ENCODE measurements at regions of chr5 and their contacts with region 1.

Region 1: DNA sequence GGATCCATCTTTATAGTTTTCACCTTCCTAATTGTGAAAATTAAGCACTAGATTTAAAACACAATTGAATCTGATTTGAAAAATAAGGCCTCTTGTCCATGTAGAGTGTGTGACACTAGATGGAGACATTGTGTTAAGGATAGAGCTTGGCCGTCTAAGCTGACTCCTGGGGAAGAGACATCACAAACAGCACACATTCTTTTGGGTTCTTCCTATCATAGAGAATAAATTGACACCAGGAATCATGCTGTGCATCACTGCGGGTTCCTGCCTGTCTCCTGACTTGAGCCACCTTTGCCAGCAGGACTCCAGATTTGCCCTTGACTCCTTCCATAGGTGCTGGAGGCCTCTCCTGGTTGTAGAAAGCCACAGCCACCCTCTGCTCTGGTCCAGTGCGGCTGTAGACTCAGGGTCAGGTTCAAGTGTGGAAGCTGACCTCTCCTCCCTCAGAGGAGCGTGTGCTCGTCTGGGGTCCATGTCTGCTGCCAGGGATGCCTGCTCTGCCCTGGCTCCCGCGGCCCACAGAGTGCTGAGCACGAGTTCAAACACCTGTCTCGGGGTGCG is 11.2 kb downstream of the ROPN1L start:
- DNase-seq: peak; percentile 62
- ATAC-seq: peak; percentile 94
- H3K4me3 ChIP-seq: no peak overlapping the region
- H3K27ac ChIP-seq: no peak overlapping the region
- H3K4me1 ChIP-seq: no peaks in the 10 kb centered on the region
- H3K27me3 ChIP-seq: no peaks in the 10 kb centered on the region; a peak in 1 of 4 replicates
- CTCF ChIP-seq: peak; percentile 70 to 89 (median 81)
- EP300 ChIP-seq: no peak
- POLR2A ChIP-seq: no peak
- RAD21 ChIP-seq: peak; percentile 100

Region 2: DNA sequence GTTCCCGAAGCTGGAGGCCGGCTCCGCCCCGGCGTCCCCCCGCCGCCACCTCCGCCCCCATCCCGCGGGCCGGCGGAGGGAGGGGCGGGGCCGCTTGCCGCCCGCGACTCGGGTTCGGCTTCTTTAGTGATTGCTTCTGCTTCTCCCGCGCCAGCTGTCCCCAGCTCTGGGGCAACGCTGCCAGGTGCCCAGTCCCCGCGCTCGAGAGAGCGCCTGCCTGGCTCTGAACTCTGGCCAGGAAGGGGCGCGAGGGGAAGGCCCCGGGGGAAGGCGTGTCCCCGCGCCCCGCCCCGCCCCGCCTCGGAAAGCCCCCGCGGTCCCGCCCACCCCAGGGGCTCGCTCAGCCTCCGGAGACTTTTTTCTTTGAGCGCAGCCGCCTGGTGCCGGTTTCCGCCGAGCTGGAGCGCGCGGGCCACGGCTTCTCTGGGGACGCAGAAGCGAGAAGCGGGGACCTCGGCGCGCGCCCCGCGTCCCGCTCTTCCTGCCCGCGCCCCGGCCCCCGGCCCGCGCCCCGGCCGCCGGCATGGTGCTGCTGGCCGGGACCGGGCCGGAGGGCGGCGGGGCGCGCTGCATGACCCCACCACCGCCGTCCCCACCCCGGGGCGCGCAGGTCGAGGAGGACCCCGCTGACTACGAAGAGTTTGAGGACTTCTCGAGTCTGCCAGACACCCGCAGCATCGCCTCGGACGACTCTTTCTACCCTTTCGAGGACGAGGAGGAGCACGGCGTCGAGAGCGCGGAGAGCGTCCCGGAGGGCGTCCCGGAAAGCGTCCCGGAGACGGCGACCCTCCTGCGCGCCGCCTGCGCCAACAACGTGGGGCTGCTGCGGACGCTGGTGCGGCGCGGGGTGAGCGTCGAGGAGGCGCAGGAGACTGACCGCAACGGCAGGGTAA is 111.3 kb after region 1 on chr5 and contains the start of gene ANKRD33B:
- CTCF ChIA-PET with region 1: interaction called, 25 read pairs
- POLR2A ChIA-PET with region 1: interaction called, 3 read pairs
- RAD21 ChIA-PET with region 1: interaction called, 6 read pairs
- SMC1A ChIA-PET with region 1: interaction called, 14 read pairs
- in situ Hi-C with region 1: no loop called
- intact Hi-C with region 1: loop called (anchors 2 kb)
- DNase-seq: no peak
- ATAC-seq: peak; percentile 64
- H3K4me3 ChIP-seq: peak within 1 kb of the TSS; percentile 87
- H3K27ac ChIP-seq: peak within 1 kb of the TSS; percentile 87
- H3K4me1 ChIP-seq: peaks cover 19% of the 10 kb centered on the region
- H3K27me3 ChIP-seq: no peaks in the 10 kb centered on the region
- CTCF ChIP-seq: no peak
- EP300 ChIP-seq: no peak
- POLR2A ChIP-seq: peak; percentile 93
- RAD21 ChIP-seq: peak; percentile 16; the same call in 1 of the 2 replicates
- polyA plus RNA-seq, gene ANKRD33B: 5.9 to 6.1 TPM

Region 3: GRCh38 chr5:10621832-10622231 is 169.0 kb after region 1 on chr5:
- CTCF ChIA-PET with region 1: interaction called, 229 read pairs
- POLR2A ChIA-PET with region 1: interaction called, 18 read pairs
- RAD21 ChIA-PET with region 1: interaction called, 186 read pairs
- SMC1A ChIA-PET with region 1: interaction called, 168 read pairs
- in situ Hi-C with region 1: loop called (anchors 5 kb)
- intact Hi-C with region 1: no loop called
- DNase-seq: no peak
- ATAC-seq: peak; percentile 17; the same call in 2 of the 3 replicates
- H3K4me3 ChIP-seq: no peak overlapping the region
- H3K27ac ChIP-seq: peak overlapping the region; percentile 47
- H3K4me1 ChIP-seq: peaks cover 27% of the 10 kb centered on the region
- H3K27me3 ChIP-seq: no peaks in the 10 kb centered on the region
- CTCF ChIP-seq: no peak
- EP300 ChIP-seq: no peak
- POLR2A ChIP-seq: no peak
- RAD21 ChIP-seq: no peak

Region 4: DNA sequence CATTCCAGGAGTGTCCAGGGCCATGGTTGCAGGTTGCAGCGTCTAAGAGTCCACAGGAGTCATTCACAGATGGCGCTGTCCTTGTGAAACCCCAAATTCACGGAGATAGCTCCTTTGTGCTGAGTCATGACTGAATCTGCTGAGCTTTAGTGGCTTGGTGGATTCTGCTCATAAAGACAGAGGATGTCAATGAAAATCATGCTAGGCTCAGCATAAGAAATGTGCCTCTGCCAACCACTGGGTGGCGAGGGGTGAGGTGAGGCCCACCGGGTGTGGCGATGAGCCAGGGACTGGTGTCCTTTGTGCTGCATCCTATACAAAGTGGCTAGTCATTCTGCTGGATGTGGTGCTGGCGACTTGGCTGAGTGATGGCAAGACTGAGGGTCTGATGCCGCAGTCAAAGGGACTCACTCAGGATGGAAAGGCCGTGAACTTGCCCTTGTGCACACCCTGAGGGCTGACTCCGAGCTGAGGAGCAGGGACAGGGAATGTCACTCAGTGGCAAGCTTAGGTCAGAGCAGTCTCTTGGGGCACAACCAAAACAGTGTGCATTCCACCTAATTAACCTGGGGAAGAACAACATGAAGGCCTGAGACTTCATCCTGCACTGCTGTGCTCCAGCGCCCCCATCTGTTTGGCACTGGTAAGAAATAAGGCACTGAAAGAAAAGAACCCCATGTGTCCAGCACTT is 236.7 kb after region 1 on chr5:
- CTCF ChIA-PET with region 1: interaction called, 111 read pairs
- POLR2A ChIA-PET with region 1: interaction called, 3 read pairs
- RAD21 ChIA-PET with region 1: interaction called, 44 read pairs
- SMC1A ChIA-PET with region 1: interaction called, 35 read pairs
- in situ Hi-C with region 1: loop called (anchors 5 kb)
- intact Hi-C with region 1: loop called (anchors 1 kb)
- DNase-seq: no peak
- ATAC-seq: peak; percentile 75
- H3K4me3 ChIP-seq: no peak overlapping the region
- H3K27ac ChIP-seq: no peak overlapping the region
- H3K4me1 ChIP-seq: peaks cover 19% of the 10 kb centered on the region
- H3K27me3 ChIP-seq: no peaks in the 10 kb centered on the region
- CTCF ChIP-seq: peak; percentile 36 to 79 (median 67); a peak in 5 of 6 replicates
- EP300 ChIP-seq: no peak
- POLR2A ChIP-seq: no peak
- RAD21 ChIP-seq: peak; percentile 76

Region 5: GRCh38 chr5:10775646-10776045 is 322.8 kb after region 1 on chr5:
- CTCF ChIA-PET with region 1: interaction called, 15 read pairs
- POLR2A ChIA-PET with region 1: no interaction called
- RAD21 ChIA-PET with region 1: interaction called, 3 read pairs
- SMC1A ChIA-PET with region 1: interaction called, 3 read pairs
- in situ Hi-C with region 1: no loop called
- intact Hi-C with region 1: no loop called
- DNase-seq: no peak
- ATAC-seq: peak; percentile 83
- H3K4me3 ChIP-seq: no peak overlapping the region
- H3K27ac ChIP-seq: no peak overlapping the region
- H3K4me1 ChIP-seq: no peaks in the 10 kb centered on the region
- H3K27me3 ChIP-seq: no peaks in the 10 kb centered on the region; a peak in 1 of 4 replicates
- CTCF ChIP-seq: peak; percentile 35 to 42 (median 35); a peak in 5 of 6 replicates
- EP300 ChIP-seq: no peak
- POLR2A ChIP-seq: no peak
- RAD21 ChIP-seq: no peak; the same call in 1 of the 2 replicates

Region 6: GRCh38 chr5:11046160-11046559 is 593.3 kb after region 1 on chr5:
- CTCF ChIA-PET with region 1: no interaction called
- POLR2A ChIA-PET with region 1: no interaction called
- RAD21 ChIA-PET with region 1: no interaction called
- SMC1A ChIA-PET with region 1: no interaction called
- in situ Hi-C with region 1: no loop called
- intact Hi-C with region 1: loop called (anchors 10 kb)
- DNase-seq: no peak
- ATAC-seq: peak; percentile 57
- H3K4me3 ChIP-seq: no peak overlapping the region
- H3K27ac ChIP-seq: no peak overlapping the region
- H3K4me1 ChIP-seq: no peaks in the 10 kb centered on the region
- H3K27me3 ChIP-seq: no peaks in the 10 kb centered on the region
- CTCF ChIP-seq: peak in 1 of 3 experiments; percentile 61; a peak in 2 of 6 replicates
- EP300 ChIP-seq: no peak
- POLR2A ChIP-seq: no peak
- RAD21 ChIP-seq: peak; percentile 35; the same call in 1 of the 2 replicates

Measured in GM12878 (cell line).